ENCODE measurements at regions of chr6 and their contacts with region 1.

Region 1: GRCh38 chr6:168616816-168617765 is 176.1 kb downstream of the SMOC2 start:
- DNase-seq: peak; percentile 65
- H3K4me3 Mint-ChIP-seq: no peak overlapping the region
- H3K27ac Mint-ChIP-seq: peak overlapping the region; percentile 54
- H3K4me1 Mint-ChIP-seq: peaks cover 36% of the 10 kb centered on the region
- H3K27me3 Mint-ChIP-seq: no peaks in the 10 kb centered on the region
- CTCF ChIP-seq: peak; percentile 53

Region 2: DNA sequence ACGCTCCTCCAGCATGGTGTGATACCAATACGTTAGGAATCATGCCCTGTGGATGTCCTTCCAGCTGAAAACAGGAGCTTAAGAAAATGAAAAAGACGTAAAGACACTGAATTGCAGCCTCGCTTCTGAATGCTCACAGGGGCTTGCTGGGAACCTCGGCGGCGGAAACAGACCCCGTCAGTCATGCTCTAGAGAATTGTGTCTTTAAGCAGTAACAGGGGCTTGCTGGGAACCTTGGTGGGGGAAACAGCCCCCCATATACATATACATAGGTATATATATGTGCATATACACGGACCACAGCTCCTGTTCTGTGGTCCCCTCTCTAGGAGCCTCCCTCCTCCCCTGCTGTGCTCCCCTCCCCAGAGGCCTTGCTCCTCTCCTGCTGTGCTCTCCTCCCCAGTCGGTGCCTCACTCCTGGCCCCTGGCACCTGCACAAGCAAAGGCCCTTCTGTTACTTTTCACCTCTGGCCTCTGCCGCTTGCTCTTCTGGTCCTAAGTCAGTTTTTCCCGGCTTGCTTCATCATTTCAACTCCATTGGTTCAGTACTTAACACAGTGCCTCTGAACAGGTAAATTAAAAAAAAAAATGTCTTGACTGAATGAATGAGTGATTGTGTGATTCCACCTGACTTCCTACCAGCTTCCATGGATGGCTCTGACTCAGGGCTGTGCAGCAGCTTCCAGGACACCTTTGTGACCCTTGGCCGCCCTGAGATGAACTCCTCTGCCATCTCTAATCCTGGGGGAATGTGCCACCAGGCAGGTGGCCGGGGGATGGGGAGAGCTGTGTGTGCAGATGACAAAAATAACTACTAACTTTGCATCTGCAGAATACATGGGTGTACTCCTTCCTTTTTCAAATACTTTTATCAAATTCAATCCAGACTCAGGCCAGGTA is 70.0 kb after region 1 on chr6:
- CTCF ChIA-PET with region 1: no interaction called
- intact Hi-C with region 1: loop called (anchors 5 kb)
- DNase-seq: peak; percentile 52
- H3K4me3 Mint-ChIP-seq: no peak overlapping the region
- H3K27ac Mint-ChIP-seq: peak overlapping the region; percentile 96
- H3K4me1 Mint-ChIP-seq: peaks cover 49% of the 10 kb centered on the region
- H3K27me3 Mint-ChIP-seq: no peaks in the 10 kb centered on the region
- CTCF ChIP-seq: no peak

Region 3: DNA sequence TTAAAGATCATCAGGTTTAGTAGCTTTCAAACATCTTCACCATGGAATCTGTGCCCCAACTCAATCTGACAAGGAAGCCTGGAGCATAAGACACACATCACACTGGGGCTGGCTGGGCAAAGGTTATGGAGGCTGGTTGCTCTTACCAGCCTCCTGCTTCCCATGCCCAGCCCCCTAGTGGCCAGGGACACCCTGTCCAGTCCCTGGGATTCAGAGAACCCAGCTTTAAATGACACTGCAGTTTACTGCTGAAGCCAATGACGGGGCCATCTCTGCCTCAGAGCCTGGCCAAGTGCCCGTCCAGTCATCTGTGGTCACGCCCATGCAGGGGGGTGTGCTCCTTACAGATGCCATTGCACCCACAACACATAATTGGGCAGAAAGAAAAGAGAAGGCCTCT is 96.7 kb after region 1 on chr6:
- CTCF ChIA-PET with region 1: no interaction called
- intact Hi-C with region 1: loop called (anchors 5 kb)
- DNase-seq: peak; percentile 80
- H3K4me3 Mint-ChIP-seq: no peak overlapping the region
- H3K27ac Mint-ChIP-seq: no peak overlapping the region
- H3K4me1 Mint-ChIP-seq: no peaks in the 10 kb centered on the region
- H3K27me3 Mint-ChIP-seq: no peaks in the 10 kb centered on the region
- CTCF ChIP-seq: peak; percentile 63

Region 4: GRCh38 chr6:168815229-168815628 is 198.1 kb after region 1 on chr6:
- CTCF ChIA-PET with region 1: no interaction called
- intact Hi-C with region 1: loop called (anchors 10 kb)
- DNase-seq: peak; percentile 54
- H3K4me3 Mint-ChIP-seq: no peak overlapping the region
- H3K27ac Mint-ChIP-seq: no peak overlapping the region
- H3K4me1 Mint-ChIP-seq: peaks cover 8% of the 10 kb centered on the region
- H3K27me3 Mint-ChIP-seq: no peaks in the 10 kb centered on the region
- CTCF ChIP-seq: peak; percentile 49

Measured in Calu3 (cell line).